Mammary epithelial cell (primary cell): ENCODE measurements at regions of chr12 and their contacts with region 1.

Region 1: DNA sequence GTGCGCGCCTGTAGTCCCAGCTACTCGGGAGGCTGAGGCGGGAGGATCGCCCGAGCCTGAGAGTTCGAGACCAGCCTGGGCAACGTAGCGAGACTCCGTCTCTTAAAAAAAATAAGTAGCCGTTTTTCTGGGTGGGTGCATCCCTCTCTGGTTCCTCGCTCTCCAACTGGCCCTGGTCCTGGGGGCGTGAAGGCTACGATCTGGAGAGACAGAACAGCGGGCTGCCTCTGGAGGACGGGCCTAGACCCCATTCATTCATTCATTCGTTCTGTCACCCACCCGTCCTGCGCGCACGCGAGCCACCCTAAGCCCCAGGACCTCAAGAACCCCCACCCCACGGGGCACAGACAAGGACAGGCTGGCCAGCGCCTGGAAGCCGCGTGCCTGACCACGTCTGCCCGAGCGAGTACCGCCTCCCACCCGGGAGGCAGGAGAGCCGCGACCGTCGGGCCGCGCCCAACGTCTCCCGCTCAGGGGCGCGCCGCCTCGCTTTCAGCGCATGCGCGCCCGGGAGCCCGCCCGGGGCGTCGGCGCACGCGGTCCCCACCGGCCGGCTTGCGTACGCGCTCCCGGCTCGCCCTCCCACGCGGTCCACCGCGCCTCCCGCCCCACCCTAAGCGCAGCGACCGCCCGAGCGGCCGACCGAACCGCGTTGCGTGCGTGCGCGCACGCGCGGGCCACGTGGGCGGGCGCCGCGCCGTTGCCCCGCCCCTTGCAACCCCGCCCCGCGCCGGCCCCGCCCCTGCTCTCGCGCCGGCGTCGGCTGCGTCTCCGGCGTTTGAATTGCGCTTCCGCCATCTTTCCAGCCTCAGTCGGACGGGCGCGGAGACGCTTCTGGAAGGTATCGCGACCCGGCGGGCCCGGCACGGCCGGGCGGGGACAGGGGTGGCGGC is at the start of gene RAN:
- DNase-seq: peak; percentile 91
- H3K4me3 ChIP-seq: peak within 1 kb of the TSS; percentile 80 to 92 (median 86)
- H3K27ac ChIP-seq: peak within 1 kb of the TSS; percentile 95
- H3K4me1 ChIP-seq: peaks cover 25% of the 10 kb centered on the region
- H3K27me3 ChIP-seq: no peaks in the 10 kb centered on the region
- CTCF ChIP-seq: no peak
- total RNA-seq, gene RAN: 537 to 1,117 TPM

Region 2: GRCh38 chr12:130761537-130762318 is 109.8 kb before region 1 on chr12:
- CTCF ChIA-PET with region 1: no interaction called
- dilution Hi-C with region 1: no loop called
- in situ Hi-C with region 1: no loop called
- intact Hi-C with region 1: loop called (anchors 2 kb)
- DNase-seq: peak; percentile 37
- H3K4me3 ChIP-seq: no peak overlapping the region
- H3K27ac ChIP-seq: no peak overlapping the region
- H3K4me1 ChIP-seq: no peaks in the 10 kb centered on the region
- H3K27me3 ChIP-seq: no peaks in the 10 kb centered on the region
- CTCF ChIP-seq: peak; percentile 46 to 80

Region 3: GRCh38 chr12:130818635-130819576 is 52.6 kb before region 1 on chr12:
- CTCF ChIA-PET with region 1: no interaction called
- dilution Hi-C with region 1: no loop called
- in situ Hi-C with region 1: no loop called
- intact Hi-C with region 1: loop called (anchors 5 kb)
- DNase-seq: peak; percentile 28
- H3K4me3 ChIP-seq: peak overlapping the region; percentile 32 to 49 (median 40)
- H3K27ac ChIP-seq: no peak overlapping the region
- H3K4me1 ChIP-seq: peaks cover 6% of the 10 kb centered on the region
- H3K27me3 ChIP-seq: no peaks in the 10 kb centered on the region
- CTCF ChIP-seq: peak; percentile 55 to 70

Region 4: GRCh38 chr12:130838951-130839769 is 32.4 kb before region 1 on chr12 and contains the start of gene STX2:
- CTCF ChIA-PET with region 1: no interaction called
- dilution Hi-C with region 1: no loop called
- in situ Hi-C with region 1: loop called in 1 of 2 experiments (anchors 5 kb)
- intact Hi-C with region 1: loop called (anchors 1 kb)
- DNase-seq: peak; percentile 56
- H3K4me3 ChIP-seq: peak within 1 kb of the TSS; percentile 67 to 89 (median 69)
- H3K27ac ChIP-seq: peak within 1 kb of the TSS; percentile 4
- H3K4me1 ChIP-seq: peaks cover 13% of the 10 kb centered on the region
- H3K27me3 ChIP-seq: no peaks in the 10 kb centered on the region
- CTCF ChIP-seq: peak; percentile 18 to 39
- total RNA-seq, gene STX2: 16.0 to 16.7 TPM

Region 5: DNA sequence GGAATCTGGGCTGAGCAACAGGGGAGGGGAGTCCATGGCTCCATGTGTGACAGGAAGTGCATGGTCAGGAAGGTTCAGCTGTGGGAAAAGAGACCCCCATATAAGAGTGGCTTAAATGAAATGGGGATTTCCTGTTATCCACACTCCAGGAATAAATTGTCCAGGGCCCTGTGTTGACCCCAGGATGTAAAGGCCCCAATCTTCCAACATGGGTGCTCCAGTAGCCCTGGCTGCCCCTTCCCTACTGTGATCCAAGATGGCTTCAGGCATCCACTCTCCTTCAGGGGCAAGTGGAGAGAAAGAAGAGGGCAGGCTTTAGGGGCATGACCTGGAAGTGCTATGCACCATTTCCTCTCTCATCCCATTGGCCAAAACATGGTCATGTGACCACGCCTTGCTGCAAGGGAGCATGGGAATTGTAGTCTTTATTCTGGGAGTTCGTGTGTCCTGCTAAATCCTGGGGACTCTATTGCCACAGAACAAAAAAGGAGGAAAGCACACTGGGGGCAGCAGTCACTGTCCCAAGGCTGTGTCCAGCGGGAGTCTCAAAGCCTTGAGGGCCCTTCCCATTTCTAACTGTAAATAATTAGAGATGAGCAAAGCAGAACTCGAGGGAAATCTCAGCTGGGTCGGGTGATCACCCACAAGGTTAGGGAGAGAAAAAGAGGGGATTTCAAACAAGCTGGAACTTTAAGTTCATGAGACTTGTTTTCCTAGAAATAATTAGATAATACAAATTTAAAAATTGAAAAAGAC is 371.4 kb after region 1 on chr12:
- CTCF ChIA-PET with region 1: no interaction called
- dilution Hi-C with region 1: no loop called
- in situ Hi-C with region 1: no loop called
- intact Hi-C with region 1: no loop called
- DNase-seq: no peak
- H3K4me3 ChIP-seq: no peak overlapping the region
- H3K27ac ChIP-seq: no peak overlapping the region
- H3K4me1 ChIP-seq: no peaks in the 10 kb centered on the region
- H3K27me3 ChIP-seq: no peaks in the 10 kb centered on the region
- CTCF ChIP-seq: no peak

Region 6: DNA sequence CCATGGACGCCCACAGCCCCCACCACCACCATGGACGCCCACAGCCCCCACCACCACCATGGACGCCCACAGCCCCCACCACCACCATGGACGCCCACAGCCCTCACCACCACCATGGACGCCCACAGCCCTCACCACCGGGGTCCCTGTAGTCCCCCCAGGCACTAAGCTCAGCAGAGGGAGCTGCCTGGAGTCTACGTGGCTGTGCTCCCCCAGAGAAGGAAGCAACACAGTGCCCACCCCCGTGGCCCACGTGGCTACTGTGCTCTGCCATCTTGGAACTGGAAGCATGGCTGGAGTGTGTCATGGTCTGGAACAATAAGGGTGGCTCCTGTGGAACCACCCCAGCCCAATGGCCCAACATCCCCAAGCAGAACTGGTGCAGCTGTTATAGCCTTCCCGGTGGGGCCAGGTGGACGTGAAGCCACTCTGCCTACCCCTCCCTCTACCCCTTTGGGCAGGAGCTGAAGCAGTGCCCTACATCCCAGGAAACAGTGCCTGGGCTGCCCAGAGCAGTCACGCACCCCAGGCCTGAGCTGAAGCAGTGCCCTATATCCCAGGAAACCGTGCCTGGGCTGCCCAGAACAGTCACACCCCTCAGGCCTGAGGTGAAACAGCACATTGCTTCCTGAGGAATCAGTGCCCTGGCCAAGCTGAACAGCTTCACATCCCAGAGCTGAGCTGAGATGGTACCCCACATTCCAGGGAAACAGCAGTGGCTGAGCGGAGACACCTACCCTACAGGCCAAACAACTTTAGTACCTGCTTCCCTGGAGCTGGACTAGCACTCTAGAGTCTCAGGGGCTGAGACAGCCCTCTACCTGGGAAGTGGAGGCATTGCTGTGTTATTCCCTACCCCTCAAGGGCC is 830.4 kb after region 1 on chr12:
- CTCF ChIA-PET with region 1: no interaction called
- dilution Hi-C with region 1: loop called (anchors 10 kb)
- in situ Hi-C with region 1: no loop called
- intact Hi-C with region 1: no loop called
- DNase-seq: no peak
- H3K4me3 ChIP-seq: no peak overlapping the region
- H3K27ac ChIP-seq: no peak overlapping the region
- H3K4me1 ChIP-seq: no peaks in the 10 kb centered on the region
- H3K27me3 ChIP-seq: no peaks in the 10 kb centered on the region
- CTCF ChIP-seq: no peak

Region 7: GRCh38 chr12:131710464-131711457 is 839.2 kb after region 1 on chr12 and contains the start of gene SFSWAP:
- CTCF ChIA-PET with region 1: no interaction called
- dilution Hi-C with region 1: loop called (anchors 10 kb)
- in situ Hi-C with region 1: no loop called
- intact Hi-C with region 1: loop called (anchors 5 kb)
- DNase-seq: peak; percentile 80
- H3K4me3 ChIP-seq: peak within 1 kb of the TSS; percentile 61 to 97 (median 81)
- H3K27ac ChIP-seq: peak within 1 kb of the TSS; percentile 98
- H3K4me1 ChIP-seq: peaks cover 15% of the 10 kb centered on the region
- H3K27me3 ChIP-seq: no peaks in the 10 kb centered on the region
- CTCF ChIP-seq: no peak
- total RNA-seq, gene SFSWAP: 19.8 to 41.6 TPM